Sigmoid colon (tissue), 7 donors: ENCODE measurements at regions of chr21 and their contacts with region 1.

Region 1: DNA sequence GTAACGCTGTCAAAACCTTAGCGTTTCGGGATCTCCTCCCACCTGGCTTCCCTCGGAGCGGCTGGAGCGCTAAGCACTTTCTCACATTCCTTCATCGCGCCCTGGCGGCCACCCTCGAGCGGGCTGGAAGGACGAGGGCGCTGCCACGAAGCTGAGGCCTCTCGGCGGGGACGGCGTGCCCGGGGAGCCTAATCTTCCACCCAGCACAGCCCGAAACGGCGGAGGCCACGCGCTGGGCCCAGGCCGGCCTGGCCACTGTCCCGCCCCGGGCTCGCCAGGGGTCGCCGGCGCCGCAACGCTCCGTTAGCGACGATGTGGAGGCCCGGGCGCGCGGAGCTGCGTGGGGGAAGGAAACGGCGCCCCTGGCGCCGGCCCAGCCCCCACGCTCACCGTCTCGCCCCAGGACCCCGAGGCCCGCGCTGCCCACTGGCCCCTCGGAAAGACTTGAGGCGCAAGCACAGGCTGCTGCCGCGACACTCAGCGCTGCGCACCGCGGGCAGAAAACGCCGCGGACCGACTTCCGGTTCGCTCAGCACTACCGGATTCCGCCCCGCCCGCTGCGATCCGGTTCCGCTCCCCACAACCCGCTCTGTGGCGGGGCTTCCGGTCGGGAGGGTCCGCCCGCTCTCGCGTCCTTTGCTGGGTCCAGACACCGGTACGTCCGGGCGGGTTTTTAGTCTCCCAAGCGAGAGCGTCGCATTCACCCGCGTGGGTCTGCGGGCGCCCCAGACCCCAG is at the start of gene YBEY:
- DNase-seq: peak; percentile 94
- H3K4me3 ChIP-seq: peak within 1 kb of the TSS; percentile 83 to 95 (median 90)
- H3K27ac ChIP-seq: peak within 1 kb of the TSS; percentile 96 to 99 (median 97)
- H3K4me1 ChIP-seq: peaks cover 0 to 60% (median 51%) of the 10 kb centered on the region in 4 donors
- H3K27me3 ChIP-seq: no peaks in the 10 kb centered on the region
- CTCF ChIP-seq: peak; percentile 12 to 59 (median 36)
- EP300 ChIP-seq: no peak
- POLR2A ChIP-seq: peak; percentile 49 to 71
- total RNA-seq, gene YBEY: 9.0 to 15.1 (median 13.2) TPM

Region 2: DNA sequence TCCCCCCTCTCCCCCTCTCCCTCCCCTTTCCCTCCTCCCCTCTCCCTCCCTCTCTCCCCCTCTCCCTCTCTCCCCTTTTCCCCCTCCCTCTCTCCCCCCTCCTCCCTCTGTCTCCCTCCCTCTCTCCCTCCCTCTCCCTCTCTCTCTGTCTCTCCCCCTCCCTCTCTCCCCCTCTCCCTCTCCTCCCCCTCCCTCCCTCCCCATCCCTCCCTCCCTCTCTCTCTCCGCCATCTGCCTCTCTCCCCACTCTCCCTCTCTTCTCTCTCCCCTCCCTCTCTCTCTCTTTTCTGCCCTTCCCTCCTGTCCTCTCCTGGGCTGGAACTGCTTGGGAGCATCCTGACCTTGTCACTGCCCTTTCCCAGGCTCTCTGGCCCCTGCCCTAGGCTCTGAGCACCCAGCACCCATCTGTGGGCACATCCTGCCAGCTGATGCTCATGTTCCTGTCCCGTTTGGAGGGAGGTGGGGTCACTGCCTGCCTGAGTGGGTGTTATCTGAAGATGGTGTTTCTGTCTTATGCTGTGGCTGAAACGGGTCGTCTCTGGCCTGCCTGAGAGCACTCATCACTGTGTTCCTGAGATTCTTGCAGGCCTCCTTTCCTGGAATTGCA is 141.4 kb before region 1 on chr21:
- intact Hi-C with region 1: loop called (anchors 5 kb)
- DNase-seq: peak; percentile 62
- H3K4me3 ChIP-seq: no peak overlapping the region
- H3K27ac ChIP-seq: no peak overlapping the region
- H3K4me1 ChIP-seq: peaks cover 0 to 10% (median 6%) of the 10 kb centered on the region in 4 donors
- H3K27me3 ChIP-seq: no peaks in the 10 kb centered on the region
- CTCF ChIP-seq: no peak
- EP300 ChIP-seq: no peak
- POLR2A ChIP-seq: no peak

Region 3: DNA sequence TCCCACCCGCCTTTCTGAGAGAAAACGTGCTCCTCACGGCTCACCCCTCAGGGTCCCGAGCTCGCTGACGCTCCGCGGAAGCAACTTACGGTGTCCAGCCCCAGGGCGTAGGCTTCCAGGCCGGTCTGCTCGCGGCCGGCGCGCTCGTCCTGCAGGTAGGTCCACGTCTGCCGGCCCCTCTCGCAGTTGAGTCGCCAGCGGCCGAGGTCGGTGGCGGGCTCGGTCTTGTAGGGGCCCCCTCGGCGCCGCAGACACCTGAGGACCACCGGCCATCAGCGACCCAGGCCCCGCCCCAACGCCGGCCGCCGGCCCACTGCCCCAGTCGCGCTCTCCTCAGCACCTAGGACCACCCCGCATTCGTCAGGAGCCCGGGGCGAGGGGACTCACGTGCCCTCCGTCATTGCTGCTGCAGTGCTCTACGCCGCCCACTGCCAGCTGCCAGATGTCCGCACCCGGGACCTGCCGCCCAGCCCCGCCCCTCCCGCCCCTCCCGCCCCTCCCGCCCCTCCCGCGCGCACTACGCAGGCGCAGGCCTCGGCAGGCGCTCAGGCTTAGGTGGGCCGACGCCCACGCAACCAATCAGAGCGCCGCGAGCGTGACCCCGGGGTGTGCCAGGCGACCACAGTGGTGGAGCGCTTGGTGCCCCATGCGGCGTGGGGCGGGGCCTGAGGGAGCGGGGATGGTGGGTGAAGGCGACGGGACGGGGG is 57.4 kb before region 1 on chr21 and contains the start of gene LSS:
- intact Hi-C with region 1: loop called (anchors 2 kb)
- DNase-seq: peak; percentile 99
- H3K4me3 ChIP-seq: peak within 1 kb of the TSS; percentile 74 to 100 (median 89)
- H3K27ac ChIP-seq: peak within 1 kb of the TSS; percentile 82 to 90 (median 90)
- H3K4me1 ChIP-seq: peaks cover 0 to 41% (median 33%) of the 10 kb centered on the region in 4 donors
- H3K27me3 ChIP-seq: no peaks in the 10 kb centered on the region
- CTCF ChIP-seq: no peak
- EP300 ChIP-seq: peak in 1 of 4 donors; percentile 53
- POLR2A ChIP-seq: peak in 1 of 2 donors; percentile 57
- total RNA-seq, gene LSS: 47.6 to 63.7 (median 57.0) TPM

Region 4: GRCh38 chr21:46323227-46324128 is 37.5 kb after region 1 on chr21 and contains the start of gene C21orf58:
- intact Hi-C with region 1: loop called (anchors 1 kb)
- DNase-seq: peak; percentile 99
- H3K4me3 ChIP-seq: peak within 1 kb of the TSS; percentile 87 to 99 (median 94)
- H3K27ac ChIP-seq: peak within 1 kb of the TSS; percentile 94 to 99 (median 98)
- H3K4me1 ChIP-seq: peaks cover 0 to 34% (median 27%) of the 10 kb centered on the region in 4 donors
- H3K27me3 ChIP-seq: no peaks in the 10 kb centered on the region
- CTCF ChIP-seq: no peak
- EP300 ChIP-seq: no peak
- POLR2A ChIP-seq: no peak
- total RNA-seq, gene C21orf58: 1.4 to 4.7 (median 1.9) TPM